IMR-90 (cell line): ENCODE measurements at regions of chr6 and their contacts with region 1.

Region 1: DNA sequence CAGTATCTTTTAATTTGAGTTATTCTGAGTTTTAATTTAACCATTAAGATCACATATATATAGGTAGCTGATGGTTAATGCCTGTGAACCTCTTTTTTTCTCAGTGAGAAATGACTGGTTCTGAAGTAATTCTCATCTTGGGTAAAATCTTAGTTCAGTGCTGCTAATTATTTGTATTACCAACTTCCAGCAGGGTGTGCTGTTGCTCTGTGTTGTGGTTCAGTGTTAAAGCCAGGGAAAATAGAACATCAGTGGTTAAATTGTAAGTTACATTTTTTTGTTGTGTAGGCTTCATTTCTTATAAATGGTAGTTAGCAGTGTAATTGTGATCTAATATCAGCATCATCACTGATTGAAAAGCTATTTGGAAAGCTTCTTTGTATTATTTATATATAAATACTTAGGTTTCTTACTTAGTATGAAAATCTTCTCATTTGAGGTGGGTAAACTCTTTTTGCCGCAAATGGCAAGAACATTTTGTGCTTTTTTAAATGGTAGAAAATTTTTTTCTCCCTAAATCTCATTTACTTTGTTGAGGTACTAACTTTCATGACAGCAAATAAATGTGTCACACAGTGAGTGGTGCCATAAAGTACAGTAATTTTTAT is 43.7 kb downstream of the CDC5L start:
- DNase-seq: peak; percentile 73
- ATAC-seq: peak; percentile 76
- H3K4me3 ChIP-seq: no peak overlapping the region
- H3K27ac ChIP-seq: no peak overlapping the region
- H3K4me1 ChIP-seq: peaks cover 2% of the 10 kb centered on the region; the same call in 1 of the 2 replicates
- H3K27me3 ChIP-seq: no peaks in the 10 kb centered on the region
- CTCF ChIP-seq: peak; percentile 85
- POLR2A ChIP-seq: no peak
- RAD21 ChIP-seq: peak; percentile 88

Region 2: GRCh38 chr6:44456070-44456965 is 25.1 kb after region 1 on chr6:
- CTCF ChIA-PET with region 1: interaction called, 8 read pairs
- POLR2A ChIA-PET with region 1: no interaction called
- dilution Hi-C with region 1: no loop called
- in situ Hi-C with region 1: no loop called
- intact Hi-C with region 1: loop called (anchors 1 kb)
- DNase-seq: peak; percentile 50
- ATAC-seq: peak; percentile 81
- H3K4me3 ChIP-seq: peak overlapping the region; percentile 17; the same call in 1 of the 2 replicates
- H3K27ac ChIP-seq: no peak overlapping the region
- H3K4me1 ChIP-seq: peaks cover 17% of the 10 kb centered on the region
- H3K27me3 ChIP-seq: peaks cover 6% of the 10 kb centered on the region; the same call in 1 of the 2 replicates
- CTCF ChIP-seq: peak; percentile 78
- POLR2A ChIP-seq: no peak
- RAD21 ChIP-seq: peak; percentile 71

Region 3: DNA sequence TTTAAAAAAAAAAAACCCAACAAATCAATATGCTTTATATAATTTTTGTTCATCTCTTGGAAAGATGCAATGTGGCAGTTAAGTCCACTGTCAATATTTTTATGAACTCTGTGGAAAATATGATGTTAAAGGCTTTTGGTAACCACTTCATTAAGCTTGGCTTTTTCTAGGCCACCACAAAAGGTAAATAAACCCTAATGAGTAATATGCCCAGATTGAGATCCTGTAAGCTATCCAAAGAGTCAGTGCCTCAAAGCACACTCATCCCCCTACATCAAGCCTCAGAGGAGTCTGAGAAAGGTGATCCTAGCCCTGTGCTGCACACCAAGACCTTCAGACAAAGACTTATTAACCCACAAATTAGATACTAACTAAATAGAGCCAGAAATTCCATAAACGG is 77.4 kb after region 1 on chr6:
- CTCF ChIA-PET with region 1: no interaction called
- POLR2A ChIA-PET with region 1: no interaction called
- dilution Hi-C with region 1: no loop called
- in situ Hi-C with region 1: no loop called
- intact Hi-C with region 1: no loop called
- DNase-seq: peak; percentile 85
- ATAC-seq: peak; percentile 93
- H3K4me3 ChIP-seq: no peak overlapping the region
- H3K27ac ChIP-seq: no peak overlapping the region
- H3K4me1 ChIP-seq: peaks cover 10% of the 10 kb centered on the region
- H3K27me3 ChIP-seq: peaks cover 61% of the 10 kb centered on the region
- CTCF ChIP-seq: no peak
- POLR2A ChIP-seq: no peak
- RAD21 ChIP-seq: no peak